Right lobe of liver (tissue), 6 donors: ENCODE measurements at regions of chr9 and their contacts with region 1.

Region 1: GRCh38 chr9:136944519-136945279 is at the starts of genes C8G and FBXW5:
- DNase-seq: peak; percentile 97 to 98 (median 98)
- ATAC-seq: peak; percentile 48 to 67 (median 60)
- H3K4me3 ChIP-seq: peak within 1 kb of the TSS; percentile 72 to 94 (median 75)
- H3K27ac ChIP-seq: peak within 1 kb of the TSS; percentile 88 to 98 (median 93)
- H3K4me1 ChIP-seq: peaks cover 0 to 43% (median 22%) of the 10 kb centered on the region in 4 donors
- H3K27me3 ChIP-seq: no peaks in the 10 kb centered on the region
- CTCF ChIP-seq: peak; percentile 99 to 100 (median 99)
- POLR2A ChIP-seq: peak; percentile 93
- total RNA-seq, gene C8G: 248 to 755 (median 453) TPM
- total RNA-seq, gene FBXW5: 84.0 to 290 (median 97.4) TPM

Region 2: GRCh38 chr9:136671646-136672430 is 272.9 kb before region 1 on chr9:
- intact Hi-C with region 1: no loop called
- DNase-seq: no peak
- ATAC-seq: peak; percentile 0 to 6 (median 2)
- H3K4me3 ChIP-seq: no peak overlapping the region
- H3K27ac ChIP-seq: peak overlapping the region in 2 of 3 donors; percentile 21 to 51
- H3K4me1 ChIP-seq: peaks cover 0 to 38% (median 19%) of the 10 kb centered on the region in 4 donors
- H3K27me3 ChIP-seq: no peaks in the 10 kb centered on the region
- CTCF ChIP-seq: peak; percentile 68 to 76 (median 72)
- POLR2A ChIP-seq: no peak

Region 3: DNA sequence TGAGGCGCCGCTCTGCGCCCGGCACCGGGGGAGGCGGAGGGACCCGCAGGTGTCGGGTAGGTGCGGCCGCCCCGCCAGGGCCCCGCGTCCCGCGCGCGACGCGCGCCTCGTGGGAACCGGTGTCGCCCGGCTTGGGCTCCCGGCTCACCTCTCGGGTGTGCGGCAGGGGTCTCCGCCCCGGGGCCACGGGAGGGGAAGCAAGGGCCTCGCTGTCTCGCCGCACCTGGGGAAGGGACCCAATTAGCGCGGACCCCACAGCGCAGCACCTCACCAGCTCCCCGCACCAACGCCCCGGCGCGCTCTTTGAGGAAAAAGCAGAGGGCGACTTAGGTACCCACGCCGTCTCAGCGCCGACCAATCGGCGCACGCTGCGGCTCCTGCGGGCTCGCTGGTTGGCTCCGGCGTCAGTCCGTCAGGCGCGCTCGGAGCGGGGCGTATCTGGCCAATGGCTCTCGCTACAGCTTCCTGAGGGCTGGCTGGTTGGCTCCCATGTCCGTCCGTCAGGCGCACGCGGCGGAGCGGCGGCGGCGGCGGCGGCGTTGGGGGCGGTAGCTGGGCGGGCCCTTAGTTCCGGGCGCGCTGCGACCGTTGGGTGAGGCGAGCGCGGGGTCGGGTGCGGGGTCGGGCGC is 58.6 kb before region 1 on chr9 and contains the start of gene TRAF2:
- intact Hi-C with region 1: loop called (anchors 10 kb)
- DNase-seq: peak; percentile 99
- ATAC-seq: peak; percentile 76 to 96 (median 89)
- H3K4me3 ChIP-seq: peak within 1 kb of the TSS; percentile 80 to 97 (median 86)
- H3K27ac ChIP-seq: peak within 1 kb of the TSS; percentile 91 to 99 (median 97)
- H3K4me1 ChIP-seq: peaks cover 0 to 50% (median 16%) of the 10 kb centered on the region in 4 donors
- H3K27me3 ChIP-seq: no peaks in the 10 kb centered on the region
- CTCF ChIP-seq: no peak
- POLR2A ChIP-seq: peak; percentile 85
- total RNA-seq, gene TRAF2: 5.8 to 8.8 (median 7.1) TPM